ENCODE measurements at regions of chr2 and their contacts with region 1.

Region 1: GRCh38 chr2:70767699-70768589 is at the start of gene ADD2:
- DNase-seq: peak in 1 of 2 experiments; percentile 80
- H3K4me3 ChIP-seq: peak within 1 kb of the TSS; percentile 67 to 86 (median 84)
- H3K27ac ChIP-seq: peak within 1 kb of the TSS; percentile 92
- H3K4me1 ChIP-seq: peaks cover 8 to 25% (median 16%) of the 10 kb centered on the region in 4 experiments; a peak in 6 of 7 replicates
- H3K27me3 ChIP-seq: no peaks in the 10 kb centered on the region
- CTCF ChIP-seq: peak; percentile 60 to 93 (median 71)
- EP300 ChIP-seq: no peak
- POLR2A ChIP-seq: peak; percentile 73 to 82
- RAD21 ChIP-seq: peak; percentile 22 to 56; a peak in 3 of 4 replicates
- total RNA-seq, gene ADD2: 166 and 170 TPM in 2 replicates

Region 2: GRCh38 chr2:70703900-70704549 is 63.9 kb before region 1 on chr2:
- CTCF ChIA-PET with region 1: interaction called, 11 read pairs
- POLR2A ChIA-PET with region 1: no interaction called
- DNase-seq: no peak
- H3K4me3 ChIP-seq: no peak overlapping the region
- H3K27ac ChIP-seq: no peak overlapping the region
- H3K4me1 ChIP-seq: no peaks in the 10 kb centered on the region
- H3K27me3 ChIP-seq: no peaks in the 10 kb centered on the region
- CTCF ChIP-seq: no peak
- EP300 ChIP-seq: no peak
- POLR2A ChIP-seq: no peak
- RAD21 ChIP-seq: no peak

Region 3: DNA sequence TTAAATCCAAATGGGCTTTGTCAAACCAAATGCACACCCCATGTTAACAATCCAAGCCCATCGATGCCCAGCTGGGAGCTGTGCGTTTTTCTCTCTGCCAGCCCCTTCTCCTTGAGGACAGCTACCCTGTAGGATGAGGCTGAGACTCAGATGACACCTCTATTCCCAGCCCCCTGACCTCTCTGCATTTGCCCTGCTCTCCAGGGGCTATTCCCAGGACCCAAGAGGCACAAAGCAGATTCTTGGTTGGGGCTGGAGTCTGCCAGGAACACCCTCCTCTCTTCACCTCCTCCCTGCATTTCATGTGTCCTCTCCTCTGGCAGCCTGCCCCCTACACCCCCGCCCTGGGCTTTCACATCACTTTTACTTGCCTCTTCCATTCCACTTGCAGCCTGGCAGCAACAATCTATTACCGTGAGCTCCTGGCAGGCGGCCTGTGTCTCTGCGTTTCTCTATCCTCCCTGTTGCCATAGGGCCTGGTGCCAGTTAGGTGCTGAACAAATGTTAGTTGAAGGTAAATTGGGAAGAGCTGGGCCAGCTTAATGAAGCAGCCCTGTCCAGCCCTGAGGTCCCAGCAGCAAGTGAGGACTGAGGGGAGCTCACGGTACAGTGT is 51.7 kb before region 1 on chr2:
- CTCF ChIA-PET with region 1: interaction called, 27 read pairs
- POLR2A ChIA-PET with region 1: interaction called, 6 read pairs
- DNase-seq: peak in 1 of 2 experiments; percentile 46
- H3K4me3 ChIP-seq: no peak overlapping the region
- H3K27ac ChIP-seq: no peak overlapping the region
- H3K4me1 ChIP-seq: peaks cover 0 to 45% (median 20%) of the 10 kb centered on the region in 4 experiments; a peak in 6 of 7 replicates
- H3K27me3 ChIP-seq: no peaks in the 10 kb centered on the region
- CTCF ChIP-seq: no peak
- EP300 ChIP-seq: no peak
- POLR2A ChIP-seq: no peak
- RAD21 ChIP-seq: no peak

Region 4: DNA sequence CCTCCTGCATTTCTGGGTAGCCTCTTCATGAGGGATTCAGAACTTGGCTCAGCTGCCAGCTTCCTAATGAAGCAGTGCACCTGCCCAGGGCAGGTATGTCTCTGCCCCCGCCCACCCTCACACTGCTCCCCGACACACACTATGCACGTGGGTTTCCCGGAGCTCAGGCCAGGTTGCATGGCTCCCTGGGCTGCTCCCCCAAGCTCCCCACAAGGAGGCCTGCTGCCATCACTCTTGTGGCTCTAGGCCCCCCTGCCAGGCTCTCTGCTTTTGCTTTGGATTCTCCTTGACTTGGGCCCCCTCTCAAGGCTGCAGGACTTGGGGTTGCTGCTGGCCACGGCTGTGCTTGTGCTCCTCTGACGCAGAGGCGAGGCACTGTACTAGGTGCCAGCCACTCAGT is 43.6 kb before region 1 on chr2:
- CTCF ChIA-PET with region 1: interaction called, 21 read pairs
- POLR2A ChIA-PET with region 1: interaction called, 5 read pairs
- DNase-seq: peak in 1 of 2 experiments; percentile 41
- H3K4me3 ChIP-seq: no peak overlapping the region
- H3K27ac ChIP-seq: no peak overlapping the region
- H3K4me1 ChIP-seq: peaks cover 11 to 28% (median 22%) of the 10 kb centered on the region in 4 experiments
- H3K27me3 ChIP-seq: no peaks in the 10 kb centered on the region
- CTCF ChIP-seq: no peak
- EP300 ChIP-seq: no peak
- POLR2A ChIP-seq: no peak
- RAD21 ChIP-seq: no peak

Region 5: GRCh38 chr2:70806013-70806412 is 38.1 kb after region 1 on chr2:
- CTCF ChIA-PET with region 1: no interaction called
- POLR2A ChIA-PET with region 1: no interaction called
- DNase-seq: no peak
- H3K4me3 ChIP-seq: no peak overlapping the region
- H3K27ac ChIP-seq: no peak overlapping the region
- H3K4me1 ChIP-seq: no peaks in the 10 kb centered on the region
- H3K27me3 ChIP-seq: peaks cover 0 to 4% (median 2%) of the 10 kb centered on the region in 4 experiments; a peak in 3 of 7 replicates
- CTCF ChIP-seq: no peak
- EP300 ChIP-seq: no peak
- POLR2A ChIP-seq: no peak
- RAD21 ChIP-seq: no peak

Measured in H1 (cell line).